ENCODE measurements at regions of chr1 and their contacts with region 1.

Region 1: GRCh38 chr1:15835741-15836510 is 11.6 kb upstream of the SPEN start:
- DNase-seq: peak; percentile 99
- H3K4me3 Mint-ChIP-seq: peak overlapping the region; percentile 87
- H3K27ac Mint-ChIP-seq: peak overlapping the region; percentile 93
- H3K4me1 Mint-ChIP-seq: peaks cover 6% of the 10 kb centered on the region
- H3K27me3 Mint-ChIP-seq: no peaks in the 10 kb centered on the region
- CTCF ChIP-seq: no peak

Region 2: DNA sequence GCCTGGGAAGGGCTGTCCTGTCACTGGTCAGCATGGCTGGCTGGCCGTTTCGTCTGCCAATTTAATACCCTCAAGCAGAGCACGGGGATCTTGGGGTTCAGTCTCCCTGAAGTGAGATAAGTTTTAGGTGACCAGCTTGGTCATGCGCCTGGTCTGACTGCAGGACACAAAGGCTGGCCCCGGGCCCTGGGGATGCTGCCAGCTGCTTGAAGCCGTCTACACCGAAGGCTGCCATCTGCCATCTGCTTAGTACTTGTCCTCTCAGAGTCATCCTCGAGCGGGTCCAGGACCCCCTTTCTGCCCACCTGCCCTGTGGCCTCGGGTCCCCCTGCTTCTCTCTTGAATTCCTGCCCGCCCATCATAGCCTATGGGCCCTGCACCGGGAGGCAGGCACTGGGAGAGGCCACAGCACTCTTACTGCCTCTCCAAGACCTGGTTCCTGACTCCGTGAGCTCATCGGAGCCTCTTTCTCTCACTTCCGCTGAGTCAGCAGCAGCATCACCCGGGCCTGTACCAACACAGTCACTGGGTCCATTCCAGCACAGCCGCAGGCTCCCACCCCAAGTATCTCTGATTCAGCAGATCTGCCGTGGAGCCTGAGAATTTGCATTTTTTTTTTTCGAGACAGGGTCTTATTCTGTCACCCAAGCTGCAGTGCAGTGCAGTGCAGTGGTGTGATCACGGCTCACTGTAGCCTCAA is 70.3 kb before region 1 on chr1:
- CTCF ChIA-PET with region 1: interaction called, 3 read pairs
- POLR2A ChIA-PET with region 1: interaction called, 15 read pairs
- intact Hi-C with region 1: no loop called
- DNase-seq: peak; percentile 97
- H3K4me3 Mint-ChIP-seq: peak overlapping the region; percentile 52
- H3K27ac Mint-ChIP-seq: peak overlapping the region; percentile 52
- H3K4me1 Mint-ChIP-seq: peaks cover 26% of the 10 kb centered on the region
- H3K27me3 Mint-ChIP-seq: no peaks in the 10 kb centered on the region
- CTCF ChIP-seq: no peak

Region 3: DNA sequence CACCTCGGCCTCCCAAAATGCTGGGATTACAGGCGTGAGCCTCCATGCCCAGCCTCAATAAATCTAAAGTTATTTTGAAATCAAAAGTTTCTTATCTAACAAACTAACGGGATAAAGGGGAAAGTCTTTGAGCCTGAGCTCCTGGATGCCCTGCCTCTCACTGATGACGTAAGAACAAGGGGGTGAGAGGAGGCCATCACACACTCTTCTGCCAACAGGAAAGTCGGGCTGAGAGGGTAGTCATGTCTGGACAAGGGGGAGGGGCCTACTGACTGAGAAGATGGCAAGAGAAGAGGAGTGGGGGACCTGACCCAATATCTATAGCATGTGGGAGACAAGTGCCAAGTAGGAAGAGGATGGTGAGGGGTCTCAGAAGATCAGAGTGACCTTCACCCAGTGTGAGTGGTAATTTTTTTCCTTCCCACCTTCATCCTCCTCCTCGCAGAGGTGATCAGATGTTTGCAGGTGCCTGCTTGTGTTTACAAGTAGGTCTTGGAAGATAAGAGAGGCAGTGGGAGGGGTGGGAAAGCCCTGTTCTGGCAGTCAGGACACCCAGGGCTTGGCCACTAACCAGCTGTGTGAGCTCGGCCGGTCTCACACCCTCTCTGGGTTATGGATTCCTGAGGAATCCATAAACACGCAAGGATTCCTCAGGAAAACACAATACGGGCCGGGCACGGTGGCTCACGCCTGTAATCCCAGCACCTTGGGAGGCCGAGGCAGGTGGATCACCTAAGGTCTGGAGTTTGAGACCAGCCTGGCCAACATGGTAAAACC is 38.1 kb before region 1 on chr1:
- CTCF ChIA-PET with region 1: interaction called, 4 read pairs
- POLR2A ChIA-PET with region 1: interaction called, 88 read pairs
- intact Hi-C with region 1: loop called (anchors 2 kb)
- DNase-seq: peak; percentile 84
- H3K4me3 Mint-ChIP-seq: peak overlapping the region; percentile 61
- H3K27ac Mint-ChIP-seq: peak overlapping the region; percentile 93
- H3K4me1 Mint-ChIP-seq: peaks cover 68% of the 10 kb centered on the region
- H3K27me3 Mint-ChIP-seq: no peaks in the 10 kb centered on the region
- CTCF ChIP-seq: no peak

Region 4: GRCh38 chr1:15820478-15820877 is 15.4 kb before region 1 on chr1:
- CTCF ChIA-PET with region 1: interaction called, 39 read pairs
- POLR2A ChIA-PET with region 1: interaction called, 22 read pairs
- intact Hi-C with region 1: no loop called
- DNase-seq: peak; percentile 59
- H3K4me3 Mint-ChIP-seq: no peak overlapping the region
- H3K27ac Mint-ChIP-seq: no peak overlapping the region
- H3K4me1 Mint-ChIP-seq: peaks cover 13% of the 10 kb centered on the region
- H3K27me3 Mint-ChIP-seq: no peaks in the 10 kb centered on the region
- CTCF ChIP-seq: no peak

Region 5: DNA sequence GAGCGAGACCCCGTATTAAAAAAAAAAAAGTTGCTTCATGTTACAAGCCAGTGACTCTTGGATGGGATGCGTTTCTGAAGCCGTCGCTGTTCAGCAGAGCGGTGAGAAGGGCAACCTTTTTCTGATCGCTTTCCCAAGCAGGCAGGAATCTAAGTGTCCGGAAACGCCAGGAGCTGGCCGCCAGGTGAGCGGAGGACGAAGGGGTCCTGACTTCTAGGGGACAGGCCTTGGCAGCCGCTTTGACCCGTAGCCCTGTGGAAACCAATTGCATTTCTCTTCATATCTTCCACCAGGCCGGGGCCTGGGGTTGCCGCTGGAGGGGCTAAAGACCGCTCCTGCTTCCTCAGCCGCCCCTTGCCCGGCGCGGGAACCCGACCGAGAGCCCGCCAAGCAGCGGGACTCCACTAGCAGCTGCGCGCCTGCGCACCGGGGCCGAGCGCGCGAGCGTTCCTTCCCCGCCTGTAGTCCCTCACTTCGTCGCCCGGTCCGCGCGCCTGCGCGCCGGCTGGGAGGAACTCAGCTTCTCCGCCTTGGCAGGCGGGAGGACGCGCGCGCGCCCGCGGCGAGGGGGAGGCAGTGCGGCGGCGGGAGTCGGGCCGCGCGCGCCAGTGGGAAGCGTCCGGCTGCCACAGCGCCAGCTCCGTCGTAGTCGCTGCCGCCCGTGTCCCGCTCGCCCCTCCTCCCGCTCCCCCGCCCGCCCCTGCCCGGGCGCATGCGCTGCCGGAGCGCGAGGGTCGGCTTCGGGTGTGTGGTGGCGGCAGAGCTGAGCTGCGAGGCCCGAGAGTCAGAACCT is 11.4 kb after region 1 on chr1 and contains the start of gene SPEN:
- CTCF ChIA-PET with region 1: interaction called, 7 read pairs
- POLR2A ChIA-PET with region 1: interaction called, 283 read pairs
- intact Hi-C with region 1: loop called (anchors 1 kb)
- DNase-seq: peak; percentile 97
- H3K4me3 Mint-ChIP-seq: peak within 1 kb of the TSS; percentile 82
- H3K27ac Mint-ChIP-seq: peak within 1 kb of the TSS; percentile 97
- H3K4me1 Mint-ChIP-seq: peaks cover 19% of the 10 kb centered on the region
- H3K27me3 Mint-ChIP-seq: no peaks in the 10 kb centered on the region
- CTCF ChIP-seq: no peak
- total RNA-seq, gene SPEN: 44.2 and 50.6 TPM in 2 replicates

Region 6: DNA sequence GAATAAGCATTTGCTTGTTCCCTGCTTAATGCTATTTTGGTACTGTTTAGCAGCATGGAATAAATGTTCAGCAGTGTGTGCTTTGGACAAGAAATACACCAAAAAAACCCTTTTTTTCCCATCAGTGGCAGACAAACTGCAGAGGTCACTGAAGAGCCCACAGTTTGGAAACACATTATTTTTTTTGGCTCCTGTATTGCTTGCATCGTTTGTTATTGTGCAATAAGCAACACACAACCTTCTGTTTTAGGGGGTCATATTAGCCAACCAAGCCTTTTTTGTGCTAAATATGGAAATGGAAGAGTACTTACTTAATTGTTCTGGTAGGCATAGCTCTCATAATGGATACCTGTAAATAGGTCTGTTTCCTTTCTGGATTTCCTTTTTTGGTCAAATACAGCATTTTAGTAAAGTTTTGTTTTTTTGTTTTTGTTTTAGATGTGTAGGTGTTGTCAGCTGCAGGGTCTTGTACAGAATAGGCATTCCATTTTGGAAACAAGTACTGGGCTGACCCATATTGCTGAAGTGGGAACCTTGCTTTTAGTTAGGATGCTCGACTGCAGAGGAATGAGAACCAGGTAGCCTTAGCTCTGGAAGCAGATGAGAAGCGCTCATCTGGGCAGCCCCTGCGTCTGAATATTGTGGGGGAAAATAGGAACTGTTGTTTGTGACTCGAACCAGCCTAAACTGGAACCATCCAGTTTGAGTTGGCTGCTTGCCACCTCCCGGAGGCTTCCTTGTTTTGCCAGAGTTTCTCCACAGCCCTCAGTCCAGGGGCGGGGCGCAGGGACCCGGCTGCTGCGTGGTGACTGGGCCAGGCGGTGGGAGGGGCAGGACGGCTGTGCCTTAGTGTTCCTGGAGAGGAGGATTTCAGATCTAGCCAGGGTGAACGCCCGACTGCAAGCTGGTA is 50.0 kb after region 1 on chr1:
- CTCF ChIA-PET with region 1: interaction called, 3 read pairs
- POLR2A ChIA-PET with region 1: interaction called, 37 read pairs
- intact Hi-C with region 1: no loop called
- DNase-seq: peak; percentile 94
- H3K4me3 Mint-ChIP-seq: peak overlapping the region; percentile 74
- H3K27ac Mint-ChIP-seq: peak overlapping the region; percentile 79
- H3K4me1 Mint-ChIP-seq: peaks cover 18% of the 10 kb centered on the region
- H3K27me3 Mint-ChIP-seq: no peaks in the 10 kb centered on the region
- CTCF ChIP-seq: peak; percentile 33

Region 7: GRCh38 chr1:15949453-15950245 is 113.7 kb after region 1 on chr1:
- CTCF ChIA-PET with region 1: no interaction called
- POLR2A ChIA-PET with region 1: interaction called, 19 read pairs
- intact Hi-C with region 1: no loop called
- DNase-seq: peak; percentile 95
- H3K4me3 Mint-ChIP-seq: peak overlapping the region; percentile 47
- H3K27ac Mint-ChIP-seq: peak overlapping the region; percentile 87
- H3K4me1 Mint-ChIP-seq: peaks cover 59% of the 10 kb centered on the region
- H3K27me3 Mint-ChIP-seq: no peaks in the 10 kb centered on the region
- CTCF ChIP-seq: no peak

Measured in MCF 10A (cell line).